ENCODE measurements at regions of chr6 and their contacts with region 1.

Region 1: DNA sequence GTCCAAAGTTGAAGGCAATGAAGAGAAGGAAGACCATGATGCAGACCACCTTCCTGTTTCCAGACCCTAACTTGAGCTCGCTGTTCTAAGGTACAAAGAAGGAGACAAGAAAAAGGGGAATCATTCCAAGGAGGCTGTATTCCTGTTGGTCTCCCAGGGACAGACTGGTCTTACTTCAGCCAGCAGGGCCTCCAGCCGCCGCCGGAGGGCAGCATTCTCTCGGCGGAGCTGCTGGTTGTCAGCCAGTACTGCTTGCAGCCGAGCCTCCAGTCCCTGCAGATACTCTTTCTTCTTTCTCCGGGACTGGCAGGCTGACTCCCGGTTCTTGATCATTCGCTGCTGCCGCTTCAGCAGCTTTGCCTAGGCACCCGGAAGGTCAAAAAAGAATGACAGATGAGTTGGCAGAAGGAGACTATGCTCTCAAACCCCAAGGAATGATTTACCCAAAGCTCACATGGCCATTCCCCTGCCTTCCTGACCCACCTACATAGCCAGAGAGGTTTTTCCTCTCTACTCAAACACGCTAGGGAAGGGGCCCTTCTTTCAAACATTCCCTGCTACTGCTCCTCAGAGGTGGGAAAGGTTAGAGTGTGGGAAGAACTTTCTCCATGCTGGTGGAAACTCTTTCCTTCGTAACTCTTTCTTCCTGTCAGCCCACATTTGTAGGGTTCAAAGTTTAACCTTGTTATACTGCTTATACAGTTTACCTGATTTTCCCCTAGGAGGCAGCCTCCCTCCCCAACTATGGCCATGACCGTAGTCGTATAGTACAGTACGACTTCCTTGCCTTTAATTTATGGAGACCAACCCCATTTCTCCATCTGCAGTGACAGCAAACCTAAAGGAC is 9.0 kb downstream of the ATF6B start:
- DNase-seq: peak; percentile 62
- H3K4me3 Mint-ChIP-seq: no peak overlapping the region
- H3K27ac Mint-ChIP-seq: no peak overlapping the region
- H3K4me1 Mint-ChIP-seq: peaks cover 11% of the 10 kb centered on the region
- H3K27me3 Mint-ChIP-seq: no peaks in the 10 kb centered on the region

Region 2: GRCh38 chr6:32195652-32195901 is 76.6 kb after region 1 on chr6:
- intact Hi-C with region 1: loop called (anchors 2 kb)
- DNase-seq: peak; percentile 100
- H3K4me3 Mint-ChIP-seq: peak overlapping the region; percentile 97
- H3K27ac Mint-ChIP-seq: peak overlapping the region; percentile 98
- H3K4me1 Mint-ChIP-seq: peaks cover 48% of the 10 kb centered on the region
- H3K27me3 Mint-ChIP-seq: peaks cover 2% of the 10 kb centered on the region

Region 3: GRCh38 chr6:32244946-32245398 is 126.0 kb after region 1 on chr6:
- intact Hi-C with region 1: loop called (anchors 2 kb)
- DNase-seq: peak; percentile 57
- H3K4me3 Mint-ChIP-seq: peak overlapping the region; percentile 9
- H3K27ac Mint-ChIP-seq: no peak overlapping the region
- H3K4me1 Mint-ChIP-seq: peaks cover 27% of the 10 kb centered on the region
- H3K27me3 Mint-ChIP-seq: peaks cover 12% of the 10 kb centered on the region

Region 4: DNA sequence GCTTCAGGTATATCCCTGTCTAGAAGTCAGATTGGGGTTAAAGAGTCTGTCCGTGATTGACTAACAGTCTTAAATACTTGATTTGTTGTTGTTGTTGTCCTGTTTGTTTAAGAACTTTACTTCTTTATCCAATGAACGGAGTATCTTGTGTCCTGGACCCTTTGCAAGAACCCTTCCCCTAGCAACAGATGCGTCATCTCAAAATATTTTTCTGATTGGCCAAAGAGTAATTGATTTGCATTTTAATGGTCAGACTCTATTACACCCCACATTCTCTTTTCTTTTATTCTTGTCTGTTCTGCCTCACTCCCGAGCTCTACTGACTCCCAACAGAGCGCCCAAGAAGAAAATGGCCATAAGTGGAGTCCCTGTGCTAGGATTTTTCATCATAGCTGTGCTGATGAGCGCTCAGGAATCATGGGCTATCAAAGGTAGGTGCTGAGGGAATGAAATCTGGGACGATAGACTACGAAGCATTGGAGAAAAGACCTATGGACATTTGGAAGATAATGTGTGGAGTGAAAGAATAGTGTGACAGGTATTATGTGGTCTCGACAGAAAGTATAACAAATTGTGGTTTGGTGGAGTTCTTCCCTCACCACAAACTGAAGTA is 320.7 kb after region 1 on chr6 and contains the start of gene HLA-DRA:
- intact Hi-C with region 1: no loop called
- DNase-seq: peak; percentile 47
- H3K4me3 Mint-ChIP-seq: peak within 1 kb of the TSS; percentile 79
- H3K27ac Mint-ChIP-seq: peak within 1 kb of the TSS; percentile 30
- H3K4me1 Mint-ChIP-seq: peaks cover 24% of the 10 kb centered on the region
- H3K27me3 Mint-ChIP-seq: peaks cover 11% of the 10 kb centered on the region
- total RNA-seq, gene HLA-DRA: 39.3 and 40.1 TPM in 2 replicates

Region 5: DNA sequence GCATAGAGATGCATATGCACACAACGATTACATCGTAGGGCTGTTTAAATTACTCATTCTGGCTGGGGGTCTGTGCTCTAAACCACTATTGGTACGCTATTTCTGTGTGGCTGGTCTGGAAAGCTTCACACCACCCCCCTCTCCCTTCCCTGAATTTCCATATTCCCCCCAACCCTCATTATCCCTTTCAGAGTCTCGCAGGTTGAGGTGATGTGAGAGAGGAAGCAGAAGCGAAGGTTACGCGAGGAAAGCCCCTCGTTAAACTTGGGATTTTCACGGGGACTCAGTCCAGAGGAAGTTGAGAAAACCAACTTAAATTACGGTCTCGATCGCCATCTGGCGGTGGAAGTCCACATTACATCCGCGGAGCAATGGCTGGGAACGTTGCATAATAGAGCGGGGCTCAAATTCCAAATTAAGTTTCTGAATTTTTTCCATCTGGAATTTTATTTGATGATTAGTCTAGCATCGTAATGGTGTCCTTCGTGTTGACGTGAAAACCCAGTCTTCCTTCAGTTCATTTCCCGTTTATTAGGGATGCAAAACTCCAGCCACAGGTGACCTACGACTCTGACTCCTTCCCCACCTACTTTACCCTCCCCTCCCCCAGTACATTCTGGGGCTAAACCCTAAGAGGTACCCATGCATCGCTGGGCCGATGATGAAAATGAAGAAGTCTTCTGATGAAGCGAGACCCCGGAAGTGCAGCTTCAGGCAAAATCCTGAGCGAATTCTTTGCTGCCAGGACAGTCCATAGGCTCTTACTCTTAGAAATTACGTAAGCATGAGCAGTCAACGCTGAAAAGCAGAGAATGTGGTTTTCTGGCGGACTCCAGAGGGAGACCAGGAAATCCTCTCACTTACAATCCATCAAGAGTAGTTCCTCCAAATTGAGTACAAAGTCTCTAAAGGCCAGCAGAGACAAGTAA is 678.1 kb after region 1 on chr6:
- intact Hi-C with region 1: loop called (anchors 2 kb)
- DNase-seq: peak; percentile 65
- H3K4me3 Mint-ChIP-seq: peak overlapping the region; percentile 46
- H3K27ac Mint-ChIP-seq: no peak overlapping the region
- H3K4me1 Mint-ChIP-seq: peaks cover 31% of the 10 kb centered on the region
- H3K27me3 Mint-ChIP-seq: peaks cover 53% of the 10 kb centered on the region

Measured in activated T-helper 1 cell treated with anti-CD3 and anti-CD28 coated beads, Interleukin-12 subunit alpha, Interleukin-12 subunit beta, Interleukin-2, Interleukin-4 antibody, amounts not matched to agents 30 ng/mL and 10 ng/mL and 1 ng/mL, durations not matched to agents 14 hours and 24 hours and 36 hours (primary cell).